Calu3 (cell line): ENCODE measurements at regions of chr20 and their contacts with region 1.

Region 1: GRCh38 chr20:22586645-22587310 is 2.4 kb upstream of the FOXA2 start:
- DNase-seq: peak; percentile 51
- H3K4me3 Mint-ChIP-seq: no peak overlapping the region
- H3K27ac Mint-ChIP-seq: no peak overlapping the region
- H3K4me1 Mint-ChIP-seq: no peaks in the 10 kb centered on the region
- H3K27me3 Mint-ChIP-seq: peaks cover 10% of the 10 kb centered on the region
- CTCF ChIP-seq: peak; percentile 62

Region 2: DNA sequence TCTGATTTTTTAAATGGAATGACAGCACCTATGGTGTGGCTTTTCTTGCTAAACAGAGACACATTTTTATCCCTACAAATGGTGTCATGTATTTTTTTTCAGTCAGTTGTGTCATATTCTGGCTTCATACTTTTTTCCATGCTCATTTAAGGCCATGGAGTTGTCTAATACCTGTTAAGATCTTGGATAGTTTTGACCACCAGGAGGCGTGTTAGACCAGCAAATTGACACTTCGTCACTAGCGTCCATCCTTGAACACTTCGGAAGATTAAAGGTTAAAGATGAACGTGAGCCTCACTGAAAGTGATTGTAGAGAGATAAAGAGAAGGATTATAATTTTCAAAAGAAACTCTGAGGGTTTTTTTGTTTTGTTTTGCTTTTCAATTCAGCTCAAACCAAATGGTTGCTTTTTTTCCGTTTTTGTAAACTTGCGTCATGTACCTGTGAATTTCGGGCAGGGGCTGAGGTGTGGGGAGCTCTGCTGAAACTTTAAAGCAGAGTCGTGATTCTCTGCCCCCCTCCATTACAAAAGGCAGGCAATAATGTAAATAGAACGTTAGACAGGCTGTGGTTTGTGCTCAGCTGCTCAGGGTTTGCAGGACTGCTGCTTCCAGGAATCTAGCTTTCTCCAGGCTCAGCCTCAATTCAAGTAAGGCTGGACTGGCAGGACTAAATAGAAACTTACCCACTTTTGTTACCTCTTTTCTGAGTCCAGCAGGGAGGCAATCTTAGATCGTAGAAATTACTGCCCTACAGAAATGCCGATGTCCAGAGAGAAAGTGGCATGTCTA is 247.5 kb before region 1 on chr20:
- CTCF ChIA-PET with region 1: interaction called, 5 read pairs
- intact Hi-C with region 1: loop called (anchors 2 kb)
- DNase-seq: peak; percentile 31
- H3K4me3 Mint-ChIP-seq: no peak overlapping the region
- H3K27ac Mint-ChIP-seq: no peak overlapping the region
- H3K4me1 Mint-ChIP-seq: no peaks in the 10 kb centered on the region
- H3K27me3 Mint-ChIP-seq: no peaks in the 10 kb centered on the region
- CTCF ChIP-seq: no peak

Region 3: GRCh38 chr20:22385602-22386305 is 201.0 kb before region 1 on chr20:
- CTCF ChIA-PET with region 1: no interaction called
- intact Hi-C with region 1: loop called (anchors 5 kb)
- DNase-seq: peak; percentile 8
- H3K4me3 Mint-ChIP-seq: no peak overlapping the region
- H3K27ac Mint-ChIP-seq: no peak overlapping the region
- H3K4me1 Mint-ChIP-seq: peaks cover 9% of the 10 kb centered on the region
- H3K27me3 Mint-ChIP-seq: no peaks in the 10 kb centered on the region
- CTCF ChIP-seq: no peak

Region 4: DNA sequence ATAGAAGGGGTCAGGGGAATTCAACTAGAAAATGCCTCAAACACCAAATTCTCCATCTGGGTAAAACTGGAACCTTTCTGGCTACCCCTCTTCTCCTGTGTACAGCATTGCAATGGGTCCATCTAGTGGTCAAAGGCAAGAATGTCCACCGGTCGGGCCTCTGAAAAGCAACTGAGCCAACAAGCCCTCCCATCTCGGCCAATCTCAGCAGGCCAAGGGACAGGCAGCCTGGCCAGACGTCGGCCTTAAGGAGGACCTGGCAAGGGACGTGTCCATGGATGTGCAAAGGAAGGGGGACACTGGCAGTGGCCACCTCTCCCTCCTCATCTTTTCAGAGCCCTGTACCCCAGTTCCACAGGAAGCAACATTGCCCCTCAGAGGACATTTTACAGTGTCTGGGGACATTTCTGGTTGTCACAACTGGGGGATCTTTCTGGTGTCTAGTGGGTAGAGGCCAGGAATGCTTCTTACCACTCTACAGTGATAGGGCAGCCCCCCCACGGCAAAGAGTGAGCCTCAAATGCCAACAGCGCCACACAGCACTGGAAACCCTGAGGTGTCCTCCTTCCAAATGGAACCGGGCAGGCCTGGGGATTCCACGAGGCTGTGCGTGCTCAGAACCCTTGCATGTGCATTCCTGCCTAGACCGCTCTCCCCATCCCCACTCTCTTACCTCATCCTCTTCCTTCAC is 97.4 kb after region 1 on chr20:
- CTCF ChIA-PET with region 1: interaction called, 3 read pairs
- intact Hi-C with region 1: loop called (anchors 2 kb)
- DNase-seq: peak; percentile 21
- H3K4me3 Mint-ChIP-seq: no peak overlapping the region
- H3K27ac Mint-ChIP-seq: no peak overlapping the region
- H3K4me1 Mint-ChIP-seq: no peaks in the 10 kb centered on the region
- H3K27me3 Mint-ChIP-seq: no peaks in the 10 kb centered on the region
- CTCF ChIP-seq: peak; percentile 35